CD8-positive, alpha-beta T cell (primary cell): ENCODE measurements at regions of chr7 and their contacts with region 1.

Region 1: GRCh38 chr7:77351539-77352004 is 64.6 kb downstream of the GSAP start:
- DNase-seq: peak; percentile 8 to 92 (median 59)
- ATAC-seq: peak; percentile 73
- H3K4me3 ChIP-seq: peak overlapping the region in 1 of 2 experiments; percentile 22
- H3K4me3 Mint-ChIP-seq: peak overlapping the region; percentile 77
- H3K27ac ChIP-seq: peak overlapping the region; percentile 25 to 61
- H3K27ac Mint-ChIP-seq: peak overlapping the region; percentile 93
- H3K4me1 ChIP-seq: peaks cover 65% of the 10 kb centered on the region
- H3K4me1 Mint-ChIP-seq: peaks cover 79% of the 10 kb centered on the region
- H3K27me3 ChIP-seq: no peaks in the 10 kb centered on the region
- H3K27me3 Mint-ChIP-seq: no peaks in the 10 kb centered on the region
- CTCF ChIP-seq: no peak

Region 2: DNA sequence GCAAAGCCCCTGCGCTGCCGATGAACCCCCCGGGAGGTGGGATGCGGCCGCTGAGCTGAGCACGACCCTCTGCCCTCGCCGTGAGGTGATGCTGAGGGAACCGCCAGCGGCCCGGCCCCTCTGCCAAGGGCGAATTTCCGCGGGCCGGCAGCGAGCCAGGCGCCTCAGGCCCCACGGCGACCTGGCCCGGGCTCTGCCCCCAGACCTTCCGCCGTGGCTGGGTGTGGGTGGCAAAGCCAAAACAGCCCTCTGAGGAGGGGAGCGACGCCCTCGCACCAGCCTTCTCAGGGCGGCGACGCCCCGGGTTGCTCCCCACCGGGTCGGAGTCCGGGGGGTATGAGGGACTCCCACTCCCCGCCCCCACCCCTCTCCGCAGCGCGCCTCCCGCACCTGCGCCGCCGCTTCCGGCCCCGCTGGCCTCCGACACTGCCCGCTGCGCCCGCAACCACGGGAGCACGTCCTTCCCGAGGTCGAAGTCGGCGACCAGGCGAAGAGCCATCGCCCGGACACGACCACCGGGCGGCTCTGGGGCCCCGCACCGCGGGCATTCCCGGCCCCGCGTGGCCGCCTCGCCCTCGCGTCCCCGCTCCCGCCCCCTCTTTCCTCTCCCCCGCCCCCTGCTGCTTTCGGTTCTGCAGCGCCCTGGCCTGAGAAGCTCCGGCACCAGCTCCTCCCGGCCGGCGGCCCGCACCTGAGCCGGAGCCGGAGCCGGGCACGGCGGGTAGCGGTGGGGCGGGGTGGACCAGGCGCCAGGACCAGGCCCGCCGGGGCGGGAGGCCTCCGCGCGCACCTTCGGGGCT is 64.5 kb after region 1 on chr7 and contains the start of gene GSAP:
- CTCF ChIA-PET with region 1: interaction called, 3 read pairs
- POLR2A ChIA-PET with region 1: interaction called, 4 read pairs
- intact Hi-C with region 1: loop called (anchors 2 to 5 kb)
- DNase-seq: peak in 8 of 9 experiments; percentile 28 to 78 (median 57)
- ATAC-seq: peak; percentile 66
- H3K4me3 ChIP-seq: peak within 1 kb of the TSS; percentile 76 to 77
- H3K4me3 Mint-ChIP-seq: peak within 1 kb of the TSS; percentile 83
- H3K27ac ChIP-seq: peak within 1 kb of the TSS; percentile 58 to 74
- H3K27ac Mint-ChIP-seq: peak within 1 kb of the TSS; percentile 72
- H3K4me1 ChIP-seq: peaks cover 30% of the 10 kb centered on the region
- H3K4me1 Mint-ChIP-seq: peaks cover 39% of the 10 kb centered on the region
- H3K27me3 ChIP-seq: no peaks in the 10 kb centered on the region
- H3K27me3 Mint-ChIP-seq: no peaks in the 10 kb centered on the region
- CTCF ChIP-seq: no peak
- total RNA-seq, gene GSAP: 11.9 to 12.8 TPM

Region 3: GRCh38 chr7:77498659-77499422 is 147.3 kb after region 1 on chr7:
- CTCF ChIA-PET with region 1: no interaction called
- POLR2A ChIA-PET with region 1: no interaction called
- intact Hi-C with region 1: no loop called
- DNase-seq: no peak
- ATAC-seq: no peak
- H3K4me3 ChIP-seq: no peak overlapping the region
- H3K4me3 Mint-ChIP-seq: no peak overlapping the region
- H3K27ac ChIP-seq: no peak overlapping the region
- H3K27ac Mint-ChIP-seq: no peak overlapping the region
- H3K4me1 ChIP-seq: no peaks in the 10 kb centered on the region
- H3K4me1 Mint-ChIP-seq: no peaks in the 10 kb centered on the region
- H3K27me3 ChIP-seq: peaks cover 0 to 2% of the 10 kb centered on the region in 2 experiments
- H3K27me3 Mint-ChIP-seq: no peaks in the 10 kb centered on the region
- CTCF ChIP-seq: no peak

Region 4: DNA sequence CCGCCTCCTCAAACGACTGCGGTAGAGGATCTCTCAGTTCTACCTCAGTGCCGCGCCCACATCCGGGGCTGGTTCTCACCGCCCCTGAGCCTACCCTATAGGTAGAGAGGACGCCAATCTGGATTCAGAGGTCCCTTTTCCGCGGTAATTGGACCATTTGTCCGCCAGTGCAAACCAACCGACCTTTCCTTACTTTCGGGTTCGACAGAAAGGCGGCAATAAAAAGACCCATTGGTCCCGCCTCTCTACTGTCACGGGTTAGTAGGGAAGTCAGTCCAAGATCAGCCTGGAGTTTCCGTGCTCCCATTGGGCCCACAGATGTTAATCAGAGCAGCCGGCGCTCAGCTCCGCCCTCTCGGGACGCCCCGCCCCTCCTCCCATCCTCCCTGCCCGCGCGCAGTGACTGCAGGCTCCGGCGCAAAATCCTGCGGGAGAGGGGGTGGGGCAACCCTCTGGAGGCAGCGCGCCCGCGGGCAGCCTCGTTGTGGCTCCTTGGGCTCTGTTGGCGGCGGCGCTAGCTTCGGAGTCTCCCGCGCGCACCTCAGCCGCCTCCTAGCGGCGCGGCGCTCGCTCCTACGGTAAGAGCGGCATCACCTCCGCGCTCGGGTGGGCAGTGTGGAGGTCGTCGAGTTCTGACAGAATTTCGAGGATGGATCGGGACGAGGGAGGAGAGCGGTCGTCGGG is 447.0 kb after region 1 on chr7 and contains the starts of genes PHTF2 and TMEM60:
- CTCF ChIA-PET with region 1: no interaction called
- POLR2A ChIA-PET with region 1: no interaction called
- intact Hi-C with region 1: loop called in 1 of 2 experiments (anchors 10 kb)
- DNase-seq: peak; percentile 85 to 98 (median 90)
- ATAC-seq: peak; percentile 88
- H3K4me3 ChIP-seq: peak within 1 kb of the TSS; percentile 70 to 81
- H3K4me3 Mint-ChIP-seq: peak within 1 kb of the TSS; percentile 97
- H3K27ac ChIP-seq: peak within 1 kb of the TSS; percentile 61 to 75
- H3K27ac Mint-ChIP-seq: peak within 1 kb of the TSS; percentile 96
- H3K4me1 ChIP-seq: peaks cover 39% of the 10 kb centered on the region
- H3K4me1 Mint-ChIP-seq: peaks cover 78% of the 10 kb centered on the region
- H3K27me3 ChIP-seq: no peaks in the 10 kb centered on the region
- H3K27me3 Mint-ChIP-seq: no peaks in the 10 kb centered on the region
- CTCF ChIP-seq: peak; percentile 67
- total RNA-seq, gene PHTF2: 10.2 to 14.1 TPM
- total RNA-seq, gene TMEM60: 2.2 TPM